GM18951 (cell line): ENCODE measurements at regions of chr2 and their contacts with region 1.

Region 1: GRCh38 chr2:132669854-132670495 is at the start of gene LYPD1:
- POLR2A ChIP-seq: no peak

Region 2: DNA sequence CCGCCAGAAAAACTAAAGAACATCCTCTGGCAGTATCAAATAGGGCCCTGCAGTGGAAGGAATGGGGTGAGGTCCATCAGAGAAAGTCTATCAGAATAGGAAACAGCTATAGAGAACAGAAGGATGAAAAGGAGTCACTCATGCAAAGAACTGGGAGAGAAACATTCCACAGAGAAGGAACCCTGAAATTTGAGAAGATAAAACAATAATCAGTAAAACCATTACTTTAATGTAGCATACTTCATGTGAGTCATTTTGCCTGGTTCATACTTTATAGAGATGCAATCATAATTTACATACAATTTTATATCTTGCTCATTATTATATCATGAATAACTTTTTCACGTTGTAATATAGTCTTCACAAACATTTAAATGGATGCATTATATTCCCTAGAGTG is 496.1 kb after region 1 on chr2:
- in situ Hi-C with region 1: loop called (anchors 10 kb)
- POLR2A ChIP-seq: no peak